IMR-90 (cell line): ENCODE measurements at regions of chr10 and their contacts with region 1.

Region 1: GRCh38 chr10:92087750-92088395 is 164.3 kb downstream of the BTAF1 start:
- DNase-seq: peak; percentile 82
- ATAC-seq: peak; percentile 98
- H3K4me3 ChIP-seq: no peak overlapping the region
- H3K27ac ChIP-seq: no peak overlapping the region
- H3K4me1 ChIP-seq: no peaks in the 10 kb centered on the region
- H3K27me3 ChIP-seq: no peaks in the 10 kb centered on the region
- CTCF ChIP-seq: peak; percentile 96
- POLR2A ChIP-seq: peak; percentile 50; the same call in 1 of the 2 replicates
- RAD21 ChIP-seq: peak; percentile 96

Region 2: GRCh38 chr10:92131271-92131820 is 43.5 kb after region 1 on chr10:
- CTCF ChIA-PET with region 1: no interaction called
- POLR2A ChIA-PET with region 1: no interaction called
- dilution Hi-C with region 1: no loop called
- in situ Hi-C with region 1: no loop called
- intact Hi-C with region 1: no loop called
- DNase-seq: no peak
- ATAC-seq: no peak
- H3K4me3 ChIP-seq: no peak overlapping the region
- H3K27ac ChIP-seq: no peak overlapping the region
- H3K4me1 ChIP-seq: no peaks in the 10 kb centered on the region
- H3K27me3 ChIP-seq: no peaks in the 10 kb centered on the region
- CTCF ChIP-seq: no peak
- POLR2A ChIP-seq: no peak
- RAD21 ChIP-seq: no peak

Region 3: DNA sequence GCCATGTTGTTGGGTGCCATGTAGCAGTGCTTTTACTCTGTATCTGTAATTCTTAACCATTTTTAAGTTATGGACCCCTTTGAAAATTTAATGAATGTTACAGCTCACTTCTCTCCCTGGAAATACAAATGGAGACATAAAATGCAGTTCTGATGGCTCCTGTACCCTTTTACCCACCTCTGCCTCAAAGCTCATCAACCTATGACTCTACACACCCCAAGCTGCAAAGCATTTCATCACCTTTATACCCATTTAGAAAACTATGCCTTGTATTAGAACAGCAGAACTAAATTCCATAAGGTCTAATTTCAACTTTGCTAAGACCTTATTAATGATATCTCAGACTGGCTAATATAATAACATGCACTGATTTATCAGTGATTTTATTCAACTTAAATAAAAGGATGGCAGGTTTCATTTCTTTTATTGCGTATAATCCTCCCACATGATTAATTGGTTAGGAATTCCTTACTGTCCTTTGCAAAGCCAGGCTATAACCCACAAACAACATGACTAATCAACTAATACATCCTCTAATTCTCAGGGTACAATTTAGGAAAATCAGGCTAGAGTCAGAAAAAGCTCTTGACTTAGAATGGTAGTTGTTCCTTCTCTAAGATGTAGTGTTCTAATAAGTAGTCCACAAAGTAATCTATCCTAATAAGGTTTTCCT is 134.9 kb after region 1 on chr10:
- CTCF ChIA-PET with region 1: no interaction called
- POLR2A ChIA-PET with region 1: no interaction called
- dilution Hi-C with region 1: no loop called
- in situ Hi-C with region 1: no loop called
- intact Hi-C with region 1: no loop called
- DNase-seq: peak; percentile 75
- ATAC-seq: peak; percentile 63
- H3K4me3 ChIP-seq: no peak overlapping the region
- H3K27ac ChIP-seq: no peak overlapping the region
- H3K4me1 ChIP-seq: peaks cover 2% of the 10 kb centered on the region; the same call in 1 of the 2 replicates
- H3K27me3 ChIP-seq: no peaks in the 10 kb centered on the region
- CTCF ChIP-seq: no peak
- POLR2A ChIP-seq: no peak
- RAD21 ChIP-seq: no peak

Region 4: DNA sequence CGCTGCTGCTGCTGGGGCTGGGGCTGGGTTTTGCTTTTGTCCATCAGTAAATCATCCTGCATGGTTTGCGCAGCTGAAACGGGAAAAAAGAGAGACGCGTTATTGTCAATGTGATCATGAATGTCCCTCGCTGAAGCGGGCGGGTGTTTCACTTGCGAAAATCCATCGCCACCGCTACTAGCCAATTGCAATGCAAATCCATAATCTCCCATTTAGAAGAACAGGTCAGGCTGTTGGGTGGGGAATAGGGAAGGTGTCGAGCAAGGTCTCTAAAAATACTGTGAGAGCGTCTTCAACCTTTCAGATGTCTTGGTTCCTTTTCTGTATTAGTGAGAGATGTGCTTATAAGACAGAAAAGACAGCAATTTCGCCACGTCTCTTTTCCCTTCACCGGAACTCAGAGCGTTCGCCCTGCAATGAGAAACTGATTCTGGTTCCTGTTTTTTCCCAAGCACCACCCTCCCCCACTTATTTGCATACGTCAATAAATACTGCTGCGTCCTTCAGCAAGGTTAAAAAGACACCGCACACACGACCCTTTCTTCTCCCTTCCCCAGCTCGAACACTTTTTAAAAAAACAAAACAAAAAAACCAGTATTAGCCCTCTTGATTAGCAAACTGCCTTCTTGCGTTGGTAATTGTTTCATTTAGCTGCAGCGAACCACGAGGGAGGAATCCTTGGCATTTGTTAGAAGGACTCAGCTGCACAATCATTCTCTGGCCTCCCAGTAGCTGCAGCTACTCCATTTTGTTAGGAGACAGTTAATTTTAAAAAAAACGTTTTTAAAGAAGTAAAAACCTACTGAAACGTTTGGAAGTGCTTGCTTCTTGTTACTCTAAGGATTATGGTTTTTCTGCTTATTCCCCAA is 152.7 kb after region 1 on chr10:
- CTCF ChIA-PET with region 1: no interaction called
- POLR2A ChIA-PET with region 1: no interaction called
- dilution Hi-C with region 1: no loop called
- in situ Hi-C with region 1: no loop called
- intact Hi-C with region 1: loop called (anchors 5 kb)
- DNase-seq: peak; percentile 70
- ATAC-seq: peak; percentile 66
- H3K4me3 ChIP-seq: peak overlapping the region; percentile 78
- H3K27ac ChIP-seq: peak overlapping the region; percentile 31
- H3K4me1 ChIP-seq: peaks cover 2% of the 10 kb centered on the region; the same call in 1 of the 2 replicates
- H3K27me3 ChIP-seq: no peaks in the 10 kb centered on the region
- CTCF ChIP-seq: no peak
- POLR2A ChIP-seq: no peak
- RAD21 ChIP-seq: no peak

Region 5: DNA sequence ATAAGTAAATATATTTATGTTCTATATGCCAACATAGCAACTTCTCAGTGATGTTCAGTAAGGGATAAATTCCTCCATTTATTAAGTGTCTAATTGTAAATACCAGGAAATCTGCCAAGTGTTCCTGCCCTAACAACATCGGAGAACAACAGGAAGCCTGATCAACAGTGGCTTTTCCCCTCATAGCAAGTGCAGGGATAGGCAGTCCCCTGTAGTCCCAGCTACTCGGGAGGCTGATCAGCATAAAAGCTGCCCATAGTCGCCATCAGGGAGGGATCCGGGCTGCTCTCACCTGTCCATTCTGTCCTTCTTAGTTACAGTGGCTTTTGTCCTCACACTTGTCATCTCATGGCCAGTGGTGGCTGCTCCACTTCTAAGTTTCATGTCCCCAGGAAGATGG is 344.7 kb after region 1 on chr10:
- CTCF ChIA-PET with region 1: interaction called, 5 read pairs
- POLR2A ChIA-PET with region 1: no interaction called
- dilution Hi-C with region 1: no loop called
- in situ Hi-C with region 1: loop called (anchors 5 kb)
- intact Hi-C with region 1: loop called (anchors 1 kb)
- DNase-seq: no peak
- ATAC-seq: no peak
- H3K4me3 ChIP-seq: no peak overlapping the region
- H3K27ac ChIP-seq: no peak overlapping the region
- H3K4me1 ChIP-seq: no peaks in the 10 kb centered on the region
- H3K27me3 ChIP-seq: no peaks in the 10 kb centered on the region
- CTCF ChIP-seq: no peak
- POLR2A ChIP-seq: no peak
- RAD21 ChIP-seq: no peak